Right lobe of liver (tissue), 6 donors: ENCODE measurements at regions of chr11 and their contacts with region 1.

Region 1: GRCh38 chr11:1943977-1944376 is 3.2 kb upstream of the MRPL23 start:
- DNase-seq: peak; percentile 10 to 44 (median 27)
- ATAC-seq: no peak
- H3K4me3 ChIP-seq: no peak overlapping the region
- H3K27ac ChIP-seq: no peak overlapping the region
- H3K4me1 ChIP-seq: no peaks in the 10 kb centered on the region
- H3K27me3 ChIP-seq: no peaks in the 10 kb centered on the region
- CTCF ChIP-seq: no peak
- POLR2A ChIP-seq: no peak

Region 2: DNA sequence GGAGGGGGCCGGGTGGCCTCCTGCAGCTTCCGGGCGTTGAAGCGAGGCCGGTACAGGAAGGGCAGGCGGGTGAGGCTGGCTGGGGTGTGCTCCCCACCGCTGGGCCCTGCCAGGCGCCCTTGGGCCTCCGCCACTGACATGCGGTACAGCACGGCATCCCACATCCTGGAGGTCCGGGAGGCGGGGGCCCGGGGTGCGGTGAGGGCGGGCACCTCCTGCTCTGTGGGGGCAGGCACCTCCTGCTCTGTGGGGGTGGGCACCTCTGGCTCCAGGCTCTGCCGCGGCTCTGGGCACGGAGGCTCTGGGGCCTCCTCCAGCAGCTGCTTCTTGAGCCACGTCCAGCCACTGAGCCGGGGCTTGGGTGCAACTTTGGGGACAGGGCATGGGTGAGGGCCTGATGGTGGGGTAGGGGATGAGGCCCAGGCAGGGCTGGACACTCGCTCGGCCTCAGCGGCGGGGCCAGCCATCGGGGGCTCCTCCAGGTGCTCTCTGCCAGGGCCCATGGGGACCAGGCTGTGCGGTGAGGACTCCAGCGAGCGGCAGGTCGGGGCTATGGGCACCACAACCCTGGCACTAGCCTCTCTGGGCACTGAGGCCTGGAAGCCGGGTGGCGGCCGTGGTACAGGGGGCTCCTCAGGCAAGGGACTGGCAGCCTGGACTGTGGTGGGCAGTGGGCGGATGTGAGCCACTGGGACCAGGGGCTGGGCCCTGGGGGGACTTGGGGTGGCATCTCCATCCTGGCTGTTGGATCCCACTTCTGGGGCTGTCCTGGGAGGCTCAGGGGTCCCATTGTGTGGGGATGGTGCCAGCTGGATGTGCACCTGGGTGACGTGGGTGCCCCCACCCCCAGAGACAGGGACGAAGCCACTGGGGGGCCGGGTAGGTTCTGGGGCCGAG is 54.5 kb before region 1 on chr11:
- intact Hi-C with region 1: loop called in 1 of 2 experiments (anchors 10 kb)
- DNase-seq: no peak
- ATAC-seq: peak; percentile 14 to 53 (median 36)
- H3K4me3 ChIP-seq: no peak overlapping the region
- H3K27ac ChIP-seq: no peak overlapping the region
- H3K4me1 ChIP-seq: no peaks in the 10 kb centered on the region
- H3K27me3 ChIP-seq: no peaks in the 10 kb centered on the region
- CTCF ChIP-seq: no peak
- POLR2A ChIP-seq: no peak

Region 3: DNA sequence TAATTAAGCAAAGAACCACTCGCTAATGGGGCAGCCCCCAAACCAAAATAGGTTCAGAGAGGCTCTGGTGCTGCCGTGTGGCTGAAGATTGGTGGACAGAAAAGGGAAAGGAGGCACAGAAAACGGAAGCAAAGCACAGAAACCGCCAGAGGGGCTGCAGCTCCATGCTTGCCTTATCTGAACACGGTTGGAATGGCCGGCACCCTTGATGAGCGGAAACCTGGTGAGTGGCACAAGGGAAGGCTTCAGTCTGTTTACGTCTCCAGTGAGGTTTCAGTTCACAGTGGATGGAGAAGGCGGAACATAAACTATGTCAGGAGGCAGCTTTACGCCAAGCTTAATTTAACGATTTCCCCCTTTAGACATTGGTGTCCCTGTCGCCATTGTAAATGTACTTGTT is 47.1 kb before region 1 on chr11:
- intact Hi-C with region 1: loop called (anchors 5 to 10 kb)
- DNase-seq: no peak
- ATAC-seq: no peak
- H3K4me3 ChIP-seq: no peak overlapping the region
- H3K27ac ChIP-seq: no peak overlapping the region
- H3K4me1 ChIP-seq: peaks cover 0 to 8% (median 0%) of the 10 kb centered on the region in 4 donors
- H3K27me3 ChIP-seq: no peaks in the 10 kb centered on the region
- CTCF ChIP-seq: no peak
- POLR2A ChIP-seq: no peak

Region 4: GRCh38 chr11:2002807-2003206 is 58.8 kb after region 1 on chr11:
- intact Hi-C with region 1: no loop called
- DNase-seq: no peak
- ATAC-seq: peak; percentile 57 to 71 (median 66)
- H3K4me3 ChIP-seq: no peak overlapping the region
- H3K27ac ChIP-seq: no peak overlapping the region
- H3K4me1 ChIP-seq: no peaks in the 10 kb centered on the region
- H3K27me3 ChIP-seq: no peaks in the 10 kb centered on the region
- CTCF ChIP-seq: no peak
- POLR2A ChIP-seq: no peak